PC-3 (cell line): ENCODE measurements at regions of chr13 and their contacts with region 1.

Region 1: GRCh38 chr13:49936085-49936940 is at the start of gene SPRYD7:
- DNase-seq: peak; percentile 93
- ATAC-seq: peak; percentile 94
- H3K4me3 ChIP-seq: peak within 1 kb of the TSS; percentile 97
- H3K27ac ChIP-seq: peak within 1 kb of the TSS; percentile 22
- H3K4me1 ChIP-seq: peaks cover 15% of the 10 kb centered on the region
- H3K27me3 ChIP-seq: no peaks in the 10 kb centered on the region
- CTCF ChIP-seq: peak; percentile 72
- total RNA-seq, gene SPRYD7: 6.3 and 6.8 TPM in 2 replicates

Region 2: DNA sequence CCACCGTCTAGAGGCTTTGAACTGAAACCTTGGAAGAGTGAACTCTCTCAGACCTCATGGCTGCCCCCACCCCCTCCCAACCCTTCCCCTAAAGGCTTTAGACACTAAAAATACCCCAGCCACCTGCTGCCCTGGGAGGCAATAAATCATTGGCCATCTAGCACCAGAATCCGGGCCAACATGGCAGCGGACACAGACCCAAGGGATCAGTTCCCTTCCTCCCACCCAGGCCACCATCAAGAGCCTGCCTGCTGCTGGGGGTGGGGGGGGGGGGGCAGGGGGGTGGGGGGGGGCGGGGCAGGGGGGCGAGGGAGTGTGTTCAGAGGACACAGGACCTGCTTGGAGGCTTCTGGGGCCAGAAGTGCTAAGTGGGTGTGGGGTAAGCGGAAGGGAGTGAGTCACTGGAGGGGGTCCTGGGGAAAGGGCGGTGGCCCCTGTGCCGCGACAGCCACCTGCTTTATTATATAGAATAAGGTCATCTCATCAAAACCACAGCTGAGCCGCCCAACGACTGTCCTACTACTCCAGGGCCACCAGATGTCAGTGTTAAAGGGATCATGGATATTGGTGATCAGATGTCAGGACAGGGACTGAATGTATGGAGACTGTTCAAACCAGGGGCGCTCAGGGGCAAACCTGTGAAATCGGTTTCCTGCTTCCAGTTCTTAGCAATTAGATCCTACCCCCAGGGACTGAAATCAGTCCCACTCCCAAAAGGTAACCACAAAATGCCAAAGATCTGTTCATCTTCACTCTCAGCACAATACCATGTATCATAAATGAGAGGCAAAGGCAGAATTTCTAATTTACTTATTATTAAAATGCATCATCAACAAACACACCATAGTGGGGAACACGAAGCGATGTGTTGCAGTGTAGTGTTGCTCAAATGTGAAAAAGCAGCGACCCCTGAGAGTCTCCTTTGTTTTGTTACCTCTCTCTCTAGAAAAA is 283.7 kb before region 1 on chr13:
- CTCF ChIA-PET with region 1: interaction called, 10 read pairs
- POLR2A ChIA-PET with region 1: no interaction called
- intact Hi-C with region 1: loop called (anchors 10 kb)
- DNase-seq: peak; percentile 63
- ATAC-seq: peak; percentile 55
- H3K4me3 ChIP-seq: no peak overlapping the region
- H3K27ac ChIP-seq: no peak overlapping the region
- H3K4me1 ChIP-seq: peaks cover 25% of the 10 kb centered on the region
- H3K27me3 ChIP-seq: no peaks in the 10 kb centered on the region
- CTCF ChIP-seq: peak; percentile 65

Region 3: DNA sequence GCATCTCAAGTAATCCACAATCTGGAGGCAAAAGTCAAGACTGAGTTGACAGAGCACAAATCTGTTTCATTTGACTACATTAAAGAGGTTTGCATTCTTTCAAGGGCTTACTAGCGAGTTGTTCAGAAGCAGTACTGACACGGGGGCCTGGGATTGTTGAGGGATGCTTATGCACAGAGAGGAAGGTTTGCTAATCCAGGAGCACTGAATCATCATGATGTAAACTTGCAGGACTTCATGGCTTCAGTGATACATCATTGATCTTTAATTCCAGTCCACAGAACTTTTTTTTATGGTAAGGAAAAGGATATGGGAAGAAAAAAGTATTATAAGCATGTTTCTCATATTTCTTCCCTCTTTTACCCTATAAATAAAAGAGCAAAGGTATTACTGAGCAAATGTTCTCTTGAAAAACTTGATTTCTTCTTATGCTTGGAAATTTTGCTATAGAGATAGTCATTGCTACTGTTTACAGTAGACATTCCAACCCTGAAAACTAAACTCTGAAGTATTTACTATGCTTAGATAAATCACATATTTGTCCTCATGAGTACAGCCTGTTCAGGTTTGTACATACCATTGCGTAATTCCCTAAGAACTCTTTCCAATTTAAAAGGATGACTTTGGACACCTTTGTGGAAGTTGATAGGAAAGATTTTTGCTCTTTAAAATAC is 78.0 kb before region 1 on chr13:
- CTCF ChIA-PET with region 1: interaction called, 5 read pairs
- POLR2A ChIA-PET with region 1: interaction called, 5 read pairs
- intact Hi-C with region 1: loop called (anchors 2 kb)
- DNase-seq: peak; percentile 86
- ATAC-seq: peak; percentile 87
- H3K4me3 ChIP-seq: peak overlapping the region; percentile 53
- H3K27ac ChIP-seq: peak overlapping the region; percentile 80
- H3K4me1 ChIP-seq: peaks cover 32% of the 10 kb centered on the region
- H3K27me3 ChIP-seq: no peaks in the 10 kb centered on the region
- CTCF ChIP-seq: no peak

Region 4: GRCh38 chr13:49996951-49997895 is 60.9 kb after region 1 on chr13 and contains the start of gene TRIM13:
- CTCF ChIA-PET with region 1: interaction called, 15 read pairs
- POLR2A ChIA-PET with region 1: no interaction called
- intact Hi-C with region 1: no loop called
- DNase-seq: peak; percentile 79
- ATAC-seq: peak; percentile 80
- H3K4me3 ChIP-seq: peak within 1 kb of the TSS; percentile 95
- H3K27ac ChIP-seq: peak within 1 kb of the TSS; percentile 89
- H3K4me1 ChIP-seq: peaks cover 23% of the 10 kb centered on the region
- H3K27me3 ChIP-seq: no peaks in the 10 kb centered on the region
- CTCF ChIP-seq: peak; percentile 77
- total RNA-seq, gene TRIM13: 6.7 and 13.7 TPM in 2 replicates